ENCODE measurements at regions of chr14 and their contacts with region 1.

Region 1: GRCh38 chr14:56659964-56660551 is 80.5 kb downstream of the TMEM260 start:
- DNase-seq: peak; percentile 61
- H3K4me3 ChIP-seq: no peak overlapping the region
- H3K27ac ChIP-seq: no peak overlapping the region
- H3K4me1 ChIP-seq: no peaks in the 10 kb centered on the region
- H3K27me3 ChIP-seq: no peaks in the 10 kb centered on the region
- CTCF ChIP-seq: peak; percentile 50 to 64
- POLR2A ChIP-seq: no peak

Region 2: DNA sequence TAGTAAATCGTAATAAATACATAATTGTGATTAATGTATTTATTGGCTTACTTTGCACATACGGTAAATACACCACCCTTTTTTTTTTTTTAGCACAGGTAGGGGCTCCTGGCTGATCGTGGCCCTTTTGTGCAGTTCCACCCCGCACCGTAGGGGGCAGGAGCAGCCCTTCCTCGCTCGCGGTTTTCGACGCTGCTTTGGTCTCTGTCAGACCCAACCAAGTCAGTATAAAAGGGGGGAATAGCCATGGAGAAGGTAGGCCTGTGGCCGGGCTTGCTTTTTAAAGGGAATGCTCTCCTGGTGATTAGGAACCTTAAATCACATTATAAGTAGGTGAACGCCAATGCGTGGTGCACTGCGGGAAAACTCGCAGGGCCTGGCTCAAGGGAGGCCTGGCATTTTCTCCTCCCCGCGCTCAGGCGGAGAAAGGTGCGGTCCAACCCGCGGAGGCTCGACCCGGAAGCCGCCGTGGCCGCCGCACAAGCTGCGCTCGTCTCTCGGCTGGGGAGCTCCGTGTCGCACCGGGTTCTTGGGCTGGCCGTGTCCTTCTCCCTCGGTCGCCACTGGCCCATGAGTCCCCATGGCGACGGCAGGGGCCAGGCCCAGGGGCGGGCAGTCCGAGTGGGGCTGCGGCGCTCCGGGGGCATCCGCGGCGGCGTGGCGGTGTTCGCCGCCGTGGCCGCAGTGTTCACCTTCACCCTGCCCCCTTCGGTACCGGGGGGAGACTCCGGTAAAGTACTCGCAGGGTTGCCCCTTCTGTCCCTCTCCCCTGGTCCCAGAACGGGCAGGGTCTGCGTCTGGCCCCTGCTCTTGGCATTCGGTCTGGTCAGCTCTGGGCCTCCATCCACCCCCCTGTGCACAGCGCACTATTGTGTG is 80.5 kb before region 1 on chr14 and contains the start of gene TMEM260:
- CTCF ChIA-PET with region 1: interaction called, 3 read pairs
- POLR2A ChIA-PET with region 1: no interaction called
- dilution Hi-C with region 1: no loop called
- intact Hi-C with region 1: loop called (anchors 5 kb)
- DNase-seq: peak; percentile 91
- H3K4me3 ChIP-seq: peak within 1 kb of the TSS; percentile 32 to 89 (median 81)
- H3K27ac ChIP-seq: peak within 1 kb of the TSS; percentile 73
- H3K4me1 ChIP-seq: peaks cover 8% of the 10 kb centered on the region
- H3K27me3 ChIP-seq: peaks cover 0 to under 1% of the 10 kb centered on the region in 2 experiments
- CTCF ChIP-seq: peak; percentile 86 to 88
- POLR2A ChIP-seq: peak; percentile 85
- total RNA-seq, gene TMEM260: 16.2 and 16.4 TPM in 2 replicates

Region 3: DNA sequence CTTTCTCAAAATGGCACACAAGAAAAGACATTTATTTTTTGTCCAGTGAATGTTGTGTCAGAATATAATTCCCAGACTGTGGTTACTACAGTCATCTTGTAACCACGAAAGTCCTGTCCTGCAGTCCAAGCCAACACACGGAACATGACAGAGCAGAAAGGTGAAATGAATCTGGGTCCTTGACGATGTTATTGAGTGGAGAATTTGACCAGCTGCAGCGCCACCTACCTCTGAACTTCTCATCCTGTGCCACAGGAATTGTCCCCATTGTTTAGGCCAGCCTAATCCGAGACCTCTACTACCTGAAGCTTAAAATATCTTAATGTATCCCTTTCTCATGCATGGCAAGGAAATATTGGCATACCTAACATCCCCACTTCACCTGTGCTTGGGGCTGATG is 214.3 kb after region 1 on chr14:
- CTCF ChIA-PET with region 1: no interaction called
- POLR2A ChIA-PET with region 1: no interaction called
- dilution Hi-C with region 1: no loop called
- intact Hi-C with region 1: loop called (anchors 10 kb)
- DNase-seq: peak; percentile 2
- H3K4me3 ChIP-seq: no peak overlapping the region
- H3K27ac ChIP-seq: no peak overlapping the region
- H3K4me1 ChIP-seq: no peaks in the 10 kb centered on the region
- H3K27me3 ChIP-seq: no peaks in the 10 kb centered on the region
- CTCF ChIP-seq: peak; percentile 9 to 25
- POLR2A ChIP-seq: no peak

Region 4: DNA sequence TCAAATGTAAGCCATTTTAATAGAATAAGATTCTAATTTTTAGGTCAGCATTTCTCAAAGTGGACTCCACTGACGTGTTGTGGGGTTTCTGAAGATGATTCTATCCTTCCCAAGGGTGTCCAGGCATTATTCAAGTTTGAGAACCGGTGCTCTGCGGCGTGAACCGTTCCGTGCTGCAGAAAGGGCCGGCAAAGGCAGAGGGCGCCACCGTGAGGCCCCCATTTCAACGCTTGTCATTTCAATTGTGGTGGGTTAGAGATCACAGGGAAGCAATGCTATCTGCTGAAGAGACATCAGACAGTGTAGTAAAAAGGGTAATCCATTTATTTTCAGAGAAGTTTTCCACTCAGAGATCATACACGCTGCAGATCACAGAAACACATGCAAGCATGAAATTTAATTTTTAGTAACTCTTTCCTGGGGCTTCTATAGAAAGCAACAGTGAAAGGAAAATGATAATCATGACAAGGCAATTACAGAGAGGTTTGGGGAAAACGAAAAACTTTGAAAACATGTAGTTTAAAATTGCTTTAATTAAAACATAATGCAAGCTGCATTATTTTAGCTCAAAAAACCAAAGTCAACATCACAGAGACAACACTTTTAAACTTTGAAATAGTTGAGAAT is 406.9 kb after region 1 on chr14:
- CTCF ChIA-PET with region 1: no interaction called
- POLR2A ChIA-PET with region 1: no interaction called
- dilution Hi-C with region 1: no loop called
- intact Hi-C with region 1: loop called (anchors 1 kb)
- DNase-seq: peak; percentile 37
- H3K4me3 ChIP-seq: no peak overlapping the region
- H3K27ac ChIP-seq: no peak overlapping the region
- H3K4me1 ChIP-seq: no peaks in the 10 kb centered on the region
- H3K27me3 ChIP-seq: peaks cover 4 to 17% of the 10 kb centered on the region in 2 experiments
- CTCF ChIP-seq: peak; percentile 57 to 68
- POLR2A ChIP-seq: no peak

Region 5: GRCh38 chr14:57171363-57171762 is 511.3 kb after region 1 on chr14:
- CTCF ChIA-PET with region 1: no interaction called
- POLR2A ChIA-PET with region 1: no interaction called
- dilution Hi-C with region 1: no loop called
- intact Hi-C with region 1: loop called (anchors 10 kb)
- DNase-seq: no peak
- H3K4me3 ChIP-seq: no peak overlapping the region
- H3K27ac ChIP-seq: no peak overlapping the region
- H3K4me1 ChIP-seq: no peaks in the 10 kb centered on the region
- H3K27me3 ChIP-seq: peaks cover 0 to 5% of the 10 kb centered on the region in 2 experiments
- CTCF ChIP-seq: no peak
- POLR2A ChIP-seq: no peak

Region 6: DNA sequence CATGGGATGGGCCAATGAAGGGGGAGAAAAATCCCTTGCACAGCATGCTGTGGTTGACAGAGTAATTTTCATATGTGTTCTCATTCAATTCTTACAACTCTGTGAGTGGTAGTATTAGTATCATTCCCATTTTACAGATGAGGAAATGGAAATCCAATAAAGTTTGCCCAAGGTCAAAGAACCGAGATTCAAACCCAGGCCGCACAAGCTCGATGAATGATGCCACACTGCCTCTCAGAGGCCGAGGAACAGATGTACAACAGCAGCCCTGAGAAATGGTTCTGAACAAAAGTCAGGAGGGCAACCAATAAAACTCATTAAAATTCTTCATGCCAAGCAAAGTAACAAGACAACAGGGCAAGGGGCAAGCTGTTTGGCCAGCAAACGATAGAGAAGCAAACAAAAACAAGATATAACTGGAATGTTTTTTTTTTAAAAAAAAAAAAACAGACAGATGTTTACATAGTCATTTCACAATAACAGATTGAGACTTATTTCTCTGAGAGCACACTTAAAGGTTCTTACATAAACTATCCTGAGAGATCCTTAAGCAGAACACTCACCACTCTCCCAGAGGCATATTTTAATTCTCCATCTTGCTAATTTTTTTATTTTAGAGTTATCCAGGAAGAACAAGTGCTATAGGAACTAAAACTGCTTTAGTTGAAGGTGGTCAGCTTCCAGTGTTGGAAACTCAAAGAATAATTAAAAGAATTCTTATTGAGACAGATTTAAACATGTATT is 522.9 kb after region 1 on chr14:
- CTCF ChIA-PET with region 1: interaction called, 10 read pairs
- POLR2A ChIA-PET with region 1: no interaction called
- dilution Hi-C with region 1: no loop called
- intact Hi-C with region 1: loop called (anchors 10 kb)
- DNase-seq: no peak
- H3K4me3 ChIP-seq: no peak overlapping the region
- H3K27ac ChIP-seq: no peak overlapping the region
- H3K4me1 ChIP-seq: no peaks in the 10 kb centered on the region
- H3K27me3 ChIP-seq: peaks cover 17 to 18% of the 10 kb centered on the region in 2 experiments
- CTCF ChIP-seq: peak in 1 of 2 donors; percentile 5
- POLR2A ChIP-seq: no peak

Region 7: GRCh38 chr14:57382283-57382682 is 722.2 kb after region 1 on chr14:
- CTCF ChIA-PET with region 1: interaction called, 16 read pairs
- POLR2A ChIA-PET with region 1: no interaction called
- dilution Hi-C with region 1: no loop called
- intact Hi-C with region 1: no loop called
- DNase-seq: peak; percentile 81
- H3K4me3 ChIP-seq: no peak overlapping the region
- H3K27ac ChIP-seq: peak overlapping the region; percentile 76
- H3K4me1 ChIP-seq: peaks cover 18% of the 10 kb centered on the region
- H3K27me3 ChIP-seq: no peaks in the 10 kb centered on the region
- CTCF ChIP-seq: no peak
- POLR2A ChIP-seq: peak; percentile 32

Measured in endothelial cell of umbilical vein (primary cell).